HEK293 (cell line): ENCODE measurements at regions of chr20 and their contacts with region 1.

Region 1: GRCh38 chr20:63223221-63224207 is 7.6 kb upstream of the YTHDF1 start:
- H3K4me3 ChIP-seq: no peak overlapping the region
- H3K27ac ChIP-seq: no peak overlapping the region
- H3K4me1 ChIP-seq: peaks cover 4% of the 10 kb centered on the region
- CTCF ChIP-seq: peak; percentile 61; the same call in 1 of the 2 replicates

Region 2: DNA sequence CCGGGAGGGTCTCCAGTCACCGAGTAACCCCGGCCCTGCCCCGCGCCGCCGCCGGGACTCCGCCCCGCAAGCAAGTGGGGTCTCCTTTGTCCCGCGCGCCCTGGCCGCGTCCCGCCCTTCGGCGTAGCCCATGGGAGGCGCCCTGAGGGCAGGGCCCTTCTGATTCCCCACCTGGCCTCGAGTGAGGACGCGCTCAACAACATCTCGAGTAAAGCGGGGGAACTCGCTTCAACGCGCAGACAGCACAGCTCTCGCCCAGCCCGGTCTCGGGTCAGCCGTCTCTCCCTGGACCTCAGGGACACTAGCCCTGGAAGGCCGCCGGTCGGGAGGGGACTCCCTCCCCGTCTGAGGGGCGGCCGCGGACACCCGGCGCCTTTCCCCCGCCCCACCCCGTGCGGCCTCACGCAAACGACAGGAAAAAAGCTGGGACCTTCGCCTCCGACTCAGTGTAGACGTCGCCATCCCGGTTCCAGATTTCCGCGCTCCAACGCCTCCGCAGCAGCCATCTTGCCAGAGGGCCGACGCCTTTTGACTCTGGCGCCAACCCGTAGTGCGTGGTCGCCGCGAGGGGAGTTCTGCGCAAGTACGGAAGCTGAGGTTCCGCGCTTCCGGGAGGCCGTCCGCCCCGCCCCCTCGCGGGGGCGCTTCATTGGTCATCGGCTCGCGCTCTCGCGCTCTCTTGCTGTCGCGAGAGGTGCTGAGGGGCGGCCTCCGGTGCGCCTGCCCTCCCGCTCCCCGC is 286.0 kb before region 1 on chr20:
- CTCF ChIA-PET with region 1: no interaction called
- POLR2A ChIA-PET with region 1: no interaction called
- H3K4me3 ChIP-seq: peak overlapping the region; percentile 88
- H3K27ac ChIP-seq: peak overlapping the region; percentile 77
- H3K4me1 ChIP-seq: peaks cover 9% of the 10 kb centered on the region; the same call in 1 of the 2 replicates
- CTCF ChIP-seq: no peak

Region 3: DNA sequence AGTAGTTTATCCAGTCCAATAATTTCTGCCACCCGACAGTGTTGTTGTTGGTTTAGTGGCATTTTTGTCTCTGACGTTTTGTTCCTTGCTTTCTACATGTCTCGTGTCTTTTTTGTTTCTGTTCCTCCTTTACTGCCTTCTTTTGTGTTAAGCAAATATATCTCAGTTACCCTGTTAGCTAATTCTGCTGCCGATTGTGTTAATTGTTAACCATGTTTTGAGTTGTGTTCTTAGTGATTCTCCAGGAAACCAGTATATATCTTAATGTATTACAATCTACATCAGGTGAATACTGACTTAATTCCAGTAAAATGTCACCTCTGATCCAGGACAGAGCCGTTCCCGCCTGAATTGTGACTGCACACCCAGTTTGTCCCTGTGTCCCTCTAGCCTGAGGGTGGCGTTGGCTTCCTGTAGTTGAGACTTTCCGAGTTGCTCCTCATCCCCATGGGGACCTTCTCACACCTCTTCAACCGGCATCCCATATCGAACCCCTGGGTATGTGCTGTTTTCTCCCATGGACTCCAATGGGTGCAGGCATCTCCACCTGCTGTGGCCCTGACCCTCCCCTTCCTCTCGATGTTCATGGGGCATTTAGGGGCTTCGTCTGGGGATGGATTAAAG is 181.0 kb before region 1 on chr20:
- CTCF ChIA-PET with region 1: no interaction called
- POLR2A ChIA-PET with region 1: no interaction called
- H3K4me3 ChIP-seq: no peak overlapping the region
- H3K27ac ChIP-seq: no peak overlapping the region
- H3K4me1 ChIP-seq: no peaks in the 10 kb centered on the region
- CTCF ChIP-seq: no peak

Region 4: DNA sequence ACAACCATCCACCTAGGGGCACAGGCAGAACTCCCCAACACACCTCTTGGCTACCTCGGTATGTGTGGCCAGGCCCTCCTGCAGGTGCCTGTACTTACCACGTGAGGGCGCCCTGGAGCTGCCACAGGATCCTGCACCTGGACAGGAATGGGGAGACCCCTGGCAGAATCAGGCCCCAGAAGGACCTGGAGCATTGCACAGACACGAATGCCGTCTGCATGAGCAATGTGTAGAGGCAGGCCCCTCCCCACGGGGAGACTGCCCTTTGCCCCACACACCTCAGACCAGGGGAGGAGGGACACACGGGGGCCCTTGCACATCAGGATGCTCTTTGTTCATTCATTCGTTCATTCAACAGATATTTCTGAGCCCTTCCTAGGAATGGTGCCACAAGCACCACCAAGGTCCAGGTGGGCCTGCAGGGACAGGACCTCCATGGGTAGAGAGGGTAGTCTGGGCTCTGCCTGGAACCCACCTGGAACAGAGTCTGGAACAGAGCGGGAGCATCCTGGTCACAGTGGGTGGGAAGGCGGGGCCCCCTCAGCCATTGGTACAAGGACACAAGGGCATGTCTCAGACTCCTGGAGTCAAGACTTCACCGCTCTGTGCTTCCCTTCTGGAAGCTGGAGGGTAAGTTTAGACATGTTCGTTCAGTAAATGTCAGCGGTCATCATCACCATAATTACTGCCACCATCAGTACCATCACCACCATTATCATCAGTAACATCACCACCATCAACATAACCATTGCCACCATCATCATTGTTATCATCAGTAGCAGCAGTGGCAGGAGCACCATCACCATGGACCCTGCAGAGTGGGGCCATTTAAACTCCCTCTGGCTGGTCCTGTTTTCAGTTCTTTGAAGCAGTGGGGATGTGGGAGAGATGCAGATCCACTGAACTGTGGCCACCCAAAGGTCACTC is 39.8 kb before region 1 on chr20:
- CTCF ChIA-PET with region 1: interaction called, 18 read pairs
- POLR2A ChIA-PET with region 1: no interaction called
- H3K4me3 ChIP-seq: no peak overlapping the region
- H3K27ac ChIP-seq: no peak overlapping the region
- H3K4me1 ChIP-seq: peaks cover 3% of the 10 kb centered on the region; the same call in 1 of the 2 replicates
- CTCF ChIP-seq: peak; percentile 83

Region 5: GRCh38 chr20:63206904-63207303 is 16.6 kb before region 1 on chr20:
- CTCF ChIA-PET with region 1: interaction called, 10 read pairs
- POLR2A ChIA-PET with region 1: no interaction called
- H3K4me3 ChIP-seq: no peak overlapping the region
- H3K27ac ChIP-seq: no peak overlapping the region
- H3K4me1 ChIP-seq: no peaks in the 10 kb centered on the region
- CTCF ChIP-seq: no peak

Region 6: DNA sequence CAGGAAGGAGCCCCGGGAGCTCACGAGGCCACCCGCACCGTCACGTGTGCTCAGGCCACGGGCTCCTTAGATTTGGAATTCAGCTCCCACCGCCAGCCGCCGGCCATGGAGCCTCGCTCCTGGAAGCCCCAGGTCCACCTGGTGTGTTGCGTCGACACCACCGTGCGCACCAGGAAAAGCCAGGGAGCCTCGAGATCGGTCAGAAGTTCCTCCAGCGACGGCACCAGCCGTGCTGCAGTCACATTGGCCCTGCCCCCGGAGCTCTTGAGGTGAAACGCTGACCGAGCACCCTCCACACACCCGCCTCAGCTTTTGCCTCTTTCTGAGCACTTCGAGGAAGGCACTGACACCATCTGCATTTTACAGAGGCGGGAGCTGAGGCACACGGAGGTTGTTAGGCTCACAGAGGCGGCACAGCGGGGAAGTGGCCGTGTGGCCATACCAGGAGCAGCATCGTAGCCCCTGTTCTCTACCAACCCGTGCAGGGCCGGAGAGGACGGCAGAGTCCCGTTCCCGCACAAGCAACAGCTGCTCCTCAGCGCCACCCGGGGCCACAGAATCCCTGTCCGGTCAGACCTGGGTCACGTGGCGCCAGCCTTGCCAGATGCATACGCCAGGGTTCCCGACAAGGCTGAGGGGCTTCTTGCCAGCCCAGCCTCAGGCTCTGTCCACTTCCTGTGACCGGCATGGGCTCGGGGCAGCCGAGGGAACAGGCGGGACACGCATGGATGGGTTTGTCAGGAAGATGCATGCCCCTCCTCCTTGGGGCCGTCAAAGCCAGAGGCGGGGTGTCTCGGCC is 23.2 kb after region 1 on chr20:
- CTCF ChIA-PET with region 1: interaction called, 53 read pairs
- POLR2A ChIA-PET with region 1: interaction called, 3 read pairs
- H3K4me3 ChIP-seq: no peak overlapping the region
- H3K27ac ChIP-seq: no peak overlapping the region
- H3K4me1 ChIP-seq: no peaks in the 10 kb centered on the region
- CTCF ChIP-seq: no peak

Region 7: GRCh38 chr20:63272584-63273579 is 49.4 kb after region 1 on chr20 and contains the start of gene ARFGAP1:
- CTCF ChIA-PET with region 1: interaction called, 37 read pairs
- POLR2A ChIA-PET with region 1: interaction called, 26 read pairs
- H3K4me3 ChIP-seq: peak within 1 kb of the TSS; percentile 91
- H3K27ac ChIP-seq: peak within 1 kb of the TSS; percentile 32
- H3K4me1 ChIP-seq: no peaks in the 10 kb centered on the region
- CTCF ChIP-seq: no peak

Region 8: GRCh38 chr20:63290677-63291472 is 67.4 kb after region 1 on chr20:
- CTCF ChIA-PET with region 1: interaction called, 85 read pairs
- POLR2A ChIA-PET with region 1: interaction called, 6 read pairs
- H3K4me3 ChIP-seq: no peak overlapping the region
- H3K27ac ChIP-seq: no peak overlapping the region
- H3K4me1 ChIP-seq: no peaks in the 10 kb centered on the region
- CTCF ChIP-seq: peak; percentile 77

Region 9: DNA sequence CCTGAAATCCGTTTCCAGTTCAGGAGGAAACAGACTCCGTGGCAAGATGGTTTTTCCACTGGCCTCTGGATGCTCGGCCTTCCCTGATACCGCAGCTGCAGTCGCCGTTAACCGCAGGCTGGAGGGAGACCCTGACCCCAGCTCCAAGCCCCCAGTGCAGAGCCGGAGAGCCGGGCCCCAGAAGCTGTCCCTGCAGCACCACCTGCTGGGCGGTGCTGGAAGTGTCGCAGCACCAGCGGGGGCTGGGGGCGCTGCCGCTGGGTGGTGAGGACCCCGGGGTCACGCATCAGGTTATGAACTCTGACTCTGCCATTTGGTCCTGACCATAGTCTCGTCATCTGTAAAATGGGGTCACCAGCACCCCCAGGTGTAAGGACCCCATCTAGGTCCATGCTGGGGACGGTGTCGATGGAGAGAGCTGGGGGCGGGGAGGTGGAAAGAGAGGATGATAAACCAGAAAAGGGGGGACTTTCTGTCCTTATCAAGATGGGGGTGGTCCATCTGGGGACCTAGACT is 158.4 kb after region 1 on chr20:
- CTCF ChIA-PET with region 1: interaction called, 45 read pairs
- POLR2A ChIA-PET with region 1: no interaction called
- H3K4me3 ChIP-seq: no peak overlapping the region
- H3K27ac ChIP-seq: no peak overlapping the region
- H3K4me1 ChIP-seq: no peaks in the 10 kb centered on the region
- CTCF ChIP-seq: peak; percentile 86